AG04450 (cell line): ENCODE measurements at regions of chr7 and their contacts with region 1.

Region 1: GRCh38 chr7:40175725-40176510 is 41.1 kb downstream of the SUGCT start:
- DNase-seq: peak; percentile 24
- H3K4me3 ChIP-seq: no peak overlapping the region
- H3K27ac ChIP-seq: no peak overlapping the region
- H3K27me3 ChIP-seq: no peaks in the 10 kb centered on the region
- CTCF ChIP-seq: no peak

Region 2: GRCh38 chr7:40147371-40148246 is 28.3 kb before region 1 on chr7:
- CTCF ChIA-PET with region 1: no interaction called
- POLR2A ChIA-PET with region 1: no interaction called
- DNase-seq: no peak
- H3K4me3 ChIP-seq: no peak overlapping the region
- H3K27ac ChIP-seq: no peak overlapping the region
- H3K27me3 ChIP-seq: no peaks in the 10 kb centered on the region
- CTCF ChIP-seq: no peak

Region 3: DNA sequence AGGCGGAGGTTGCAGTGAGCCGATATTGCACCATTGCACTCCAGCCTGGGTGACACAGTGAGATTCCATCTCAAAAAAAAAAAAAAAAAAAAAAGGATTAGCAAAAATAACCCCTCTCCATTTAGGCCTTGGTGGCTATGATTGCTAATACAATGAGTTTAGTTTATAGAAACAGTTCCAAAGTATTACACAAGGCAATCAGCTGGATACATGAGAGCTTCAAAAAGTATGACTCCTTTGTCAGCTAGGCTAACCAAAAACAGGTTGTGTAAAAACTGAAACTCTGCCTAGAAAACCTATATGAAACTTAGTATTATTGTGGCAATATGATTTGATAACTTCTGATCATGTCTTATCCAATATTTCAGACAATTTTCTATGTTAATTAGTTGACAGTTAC is 16.1 kb after region 1 on chr7:
- CTCF ChIA-PET with region 1: interaction called, 3 read pairs
- POLR2A ChIA-PET with region 1: interaction called, 10 read pairs
- DNase-seq: peak; percentile 50
- H3K4me3 ChIP-seq: no peak overlapping the region
- H3K27ac ChIP-seq: no peak overlapping the region
- H3K27me3 ChIP-seq: no peaks in the 10 kb centered on the region
- CTCF ChIP-seq: no peak